ENCODE measurements at regions of chr20 and their contacts with region 1.

Region 1: GRCh38 chr20:50799890-50800655 is 5.2 kb downstream of the BCAS4 start:
- DNase-seq: no peak
- ATAC-seq: no peak
- H3K4me3 ChIP-seq: no peak overlapping the region
- H3K27ac ChIP-seq: no peak overlapping the region
- H3K4me1 ChIP-seq: peaks cover 8% of the 10 kb centered on the region; the same call in 1 of the 2 replicates
- H3K27me3 ChIP-seq: no peaks in the 10 kb centered on the region
- CTCF ChIP-seq: no peak

Region 2: GRCh38 chr20:50788078-50788991 is 11.7 kb before region 1 on chr20:
- CTCF ChIA-PET with region 1: no interaction called
- POLR2A ChIA-PET with region 1: no interaction called
- intact Hi-C with region 1: no loop called
- DNase-seq: peak; percentile 74
- ATAC-seq: no peak
- H3K4me3 ChIP-seq: no peak overlapping the region
- H3K27ac ChIP-seq: no peak overlapping the region
- H3K4me1 ChIP-seq: peaks cover 16% of the 10 kb centered on the region
- H3K27me3 ChIP-seq: no peaks in the 10 kb centered on the region
- CTCF ChIP-seq: peak; percentile 86

Region 3: DNA sequence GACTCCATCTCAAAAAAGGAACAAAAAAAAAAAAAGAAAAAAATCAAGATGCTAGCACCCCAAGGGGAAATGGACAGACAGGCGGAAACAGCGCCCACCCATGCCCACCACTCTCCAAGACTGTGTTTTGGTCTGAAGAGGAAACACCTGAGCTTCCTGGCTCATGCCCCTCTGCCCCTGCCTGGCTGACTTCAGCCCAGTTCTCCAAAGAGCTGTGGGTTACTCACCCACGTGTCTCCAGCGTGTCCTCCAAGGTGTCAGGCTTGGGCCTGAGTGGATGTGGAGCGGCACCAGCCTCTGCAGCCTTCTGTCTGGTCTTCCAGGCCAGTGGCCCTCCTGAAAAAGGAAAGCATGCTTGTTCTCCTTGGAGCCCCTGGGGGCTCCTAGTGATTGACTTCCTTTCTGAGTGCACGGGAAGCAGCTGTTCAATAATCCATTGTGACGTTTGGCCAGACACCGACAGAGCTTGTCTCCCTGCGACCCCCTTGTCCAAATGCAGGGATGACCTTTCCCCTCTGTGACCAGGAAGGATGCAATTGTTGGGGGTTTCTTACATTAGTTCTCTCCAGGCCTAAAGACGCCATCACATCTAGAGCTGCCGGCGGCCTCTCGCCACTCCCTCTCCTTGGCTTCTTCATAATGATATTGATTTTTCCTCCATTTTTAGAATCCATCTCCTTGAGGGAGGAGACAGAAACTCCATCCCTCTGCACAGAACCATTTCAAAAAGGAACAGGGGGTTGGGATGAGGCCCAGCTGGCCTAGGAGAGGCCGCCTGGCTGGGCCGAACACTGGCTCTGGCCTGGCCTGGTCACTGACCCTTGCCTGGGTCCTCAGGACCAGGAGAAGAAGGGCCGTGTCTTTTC is 72.7 kb after region 1 on chr20:
- CTCF ChIA-PET with region 1: no interaction called
- POLR2A ChIA-PET with region 1: interaction called, 15 read pairs
- intact Hi-C with region 1: no loop called
- DNase-seq: no peak
- ATAC-seq: no peak
- H3K4me3 ChIP-seq: no peak overlapping the region
- H3K27ac ChIP-seq: no peak overlapping the region
- H3K4me1 ChIP-seq: no peaks in the 10 kb centered on the region
- H3K27me3 ChIP-seq: no peaks in the 10 kb centered on the region
- CTCF ChIP-seq: no peak

Measured in PC-3 (cell line).